ENCODE measurements at regions of chr19 and their contacts with region 1.

Region 1: DNA sequence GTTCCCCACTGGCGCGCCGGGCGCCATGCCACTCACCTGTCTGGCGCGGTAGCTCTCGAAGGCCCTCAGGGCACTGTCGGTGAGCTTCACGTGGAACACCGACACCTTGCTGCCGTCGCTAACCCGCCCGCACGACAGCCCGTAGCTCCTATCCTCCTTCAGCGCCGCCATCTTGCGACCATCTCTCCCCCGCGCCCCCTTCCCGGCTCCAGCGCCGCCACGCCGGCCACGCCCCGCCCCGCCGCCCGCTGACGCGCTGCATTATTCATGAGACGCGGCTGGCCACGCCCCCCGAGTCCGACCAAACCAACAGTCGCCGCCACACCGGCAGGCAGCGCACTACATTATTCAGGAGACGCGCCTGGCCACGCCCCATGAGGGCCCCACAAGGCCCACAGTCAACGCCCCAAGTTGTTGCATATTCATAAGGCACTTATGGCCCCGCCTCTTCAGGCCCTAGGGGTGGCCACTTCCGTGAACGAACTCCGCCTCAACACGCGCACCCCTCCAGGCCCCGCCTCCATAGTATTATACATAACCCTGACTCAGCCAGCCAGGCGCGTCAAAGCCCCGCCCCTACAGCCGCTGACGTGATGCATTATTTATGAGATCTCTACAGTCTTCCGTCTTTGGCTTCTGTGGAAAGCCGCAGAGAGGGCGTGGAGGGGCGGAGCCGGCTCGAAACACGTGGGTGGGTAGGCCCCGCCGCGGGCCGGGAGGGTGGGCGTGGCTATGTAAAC is at the start of gene ELL:
- DNase-seq: peak; percentile 99
- ATAC-seq: peak; percentile 77
- H3K4me3 ChIP-seq: peak within 1 kb of the TSS; percentile 95 to 100 (median 96)
- H3K27ac ChIP-seq: peak within 1 kb of the TSS; percentile 94
- H3K4me1 ChIP-seq: peaks cover 53% of the 10 kb centered on the region
- H3K27me3 ChIP-seq: no peaks in the 10 kb centered on the region; a peak in 1 of 5 replicates
- CTCF ChIP-seq: 0 out of 2 replicates have a peak, but pooled peaks have one; percentile 18
- EP300 ChIP-seq: 0 out of 4 replicates have a peak, but pooled peaks of 1 of the 2 experiments have one; percentile 9
- POLR2A ChIP-seq: peak; percentile 90 to 93
- RAD21 ChIP-seq: peak; percentile 35
- total RNA-seq, gene ELL: 3.2 and 3.7 TPM in 2 replicates

Region 2: DNA sequence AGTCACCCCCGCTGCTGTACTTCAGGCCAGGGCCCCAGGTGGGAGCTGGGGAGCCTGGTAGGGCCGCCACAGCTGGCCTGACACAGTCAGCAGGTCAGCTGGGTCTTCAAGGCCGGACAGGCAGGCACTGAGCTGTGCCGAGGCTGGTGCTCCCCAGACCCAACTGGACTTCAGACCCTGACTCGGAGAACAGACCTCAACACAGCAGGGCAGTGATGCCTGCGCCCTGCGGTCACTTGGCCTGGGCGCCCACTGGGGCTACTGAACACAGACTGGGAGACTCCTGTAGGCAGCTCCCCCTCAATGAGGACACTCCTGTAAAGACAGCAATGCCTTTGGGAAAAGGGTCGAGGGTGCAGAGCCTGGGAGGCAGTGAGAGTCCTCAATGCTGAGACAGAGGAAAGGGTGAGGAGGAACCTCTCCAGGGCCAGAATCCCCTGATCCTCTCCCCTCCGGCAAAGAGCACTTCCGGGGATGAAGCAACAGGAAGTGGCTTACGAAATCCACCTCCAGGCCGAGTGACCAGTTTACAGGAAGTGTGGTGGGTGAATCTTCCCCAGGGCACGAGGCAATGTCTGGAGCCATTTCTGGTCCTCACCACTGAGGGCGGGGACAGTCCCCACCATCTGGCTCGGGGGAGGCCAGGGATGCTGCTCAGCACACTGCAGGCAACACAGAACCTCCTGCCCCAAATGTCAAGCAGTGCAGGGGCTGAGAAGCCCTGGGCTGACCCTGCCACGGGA is 43.3 kb before region 1 on chr19:
- CTCF ChIA-PET with region 1: no interaction called
- POLR2A ChIA-PET with region 1: interaction called, 5 read pairs
- in situ Hi-C with region 1: loop called (anchors 10 kb)
- intact Hi-C with region 1: no loop called
- DNase-seq: peak; percentile 88
- ATAC-seq: peak; percentile 73
- H3K4me3 ChIP-seq: peak overlapping the region in 2 of 3 experiments; percentile 9 to 45; a peak in 3 of 6 replicates
- H3K27ac ChIP-seq: peak overlapping the region; percentile 90
- H3K4me1 ChIP-seq: peaks cover 79% of the 10 kb centered on the region
- H3K27me3 ChIP-seq: no peaks in the 10 kb centered on the region
- CTCF ChIP-seq: 0 out of 2 replicates have a peak, but pooled peaks have one; percentile 21
- EP300 ChIP-seq: peak in 1 of 2 experiments; percentile 75; a peak in 2 of 4 replicates
- POLR2A ChIP-seq: peak in 1 of 2 experiments; percentile 31; a peak in 2 of 4 replicates
- RAD21 ChIP-seq: peak; percentile 8; the same call in 1 of the 2 replicates

Region 3: DNA sequence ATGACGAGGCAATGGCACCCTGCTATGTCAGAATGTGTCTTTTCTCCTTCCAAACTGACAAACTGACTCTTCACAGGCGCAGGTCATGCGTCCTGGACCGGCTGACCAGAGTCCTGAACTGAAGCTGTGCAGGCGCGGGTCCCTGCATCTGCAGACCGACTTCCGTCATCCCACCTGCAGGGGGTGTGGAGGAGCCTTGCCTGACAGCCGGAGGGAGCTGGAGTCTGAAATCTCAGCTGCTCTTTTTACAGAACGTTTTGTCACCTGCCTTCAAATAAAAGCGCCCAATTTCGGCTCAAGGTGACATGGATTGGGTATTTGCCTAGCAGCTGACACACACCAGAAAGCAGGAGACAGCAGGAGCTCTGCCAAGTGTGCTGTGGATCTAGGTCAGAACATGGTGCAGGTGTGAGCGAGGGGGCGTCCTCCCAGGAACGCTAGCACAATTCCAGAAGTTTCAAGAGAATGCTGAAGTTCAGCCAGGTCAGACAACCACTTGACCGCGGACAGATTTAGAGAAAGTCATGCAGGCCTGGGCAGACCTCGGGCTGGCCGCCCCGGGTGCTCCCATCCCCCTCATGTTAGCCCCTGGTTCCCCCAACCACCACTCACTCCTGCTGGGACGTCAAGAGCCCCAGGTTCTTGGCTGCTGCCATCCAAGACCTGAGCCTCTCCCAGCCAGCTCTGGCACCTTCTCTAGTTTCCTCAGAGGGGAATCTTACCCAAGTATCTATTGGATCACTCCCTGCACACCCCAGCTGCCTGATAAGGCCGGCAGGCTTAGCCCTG is 33.0 kb before region 1 on chr19:
- CTCF ChIA-PET with region 1: interaction called, 3 read pairs
- POLR2A ChIA-PET with region 1: interaction called, 16 read pairs
- in situ Hi-C with region 1: no loop called
- intact Hi-C with region 1: loop called (anchors 5 kb)
- DNase-seq: peak; percentile 50
- ATAC-seq: peak; percentile 82
- H3K4me3 ChIP-seq: no peak overlapping the region
- H3K27ac ChIP-seq: no peak overlapping the region
- H3K4me1 ChIP-seq: peaks cover 61% of the 10 kb centered on the region
- H3K27me3 ChIP-seq: no peaks in the 10 kb centered on the region
- CTCF ChIP-seq: peak; percentile 74
- EP300 ChIP-seq: no peak
- POLR2A ChIP-seq: no peak
- RAD21 ChIP-seq: peak; percentile 83

Region 4: DNA sequence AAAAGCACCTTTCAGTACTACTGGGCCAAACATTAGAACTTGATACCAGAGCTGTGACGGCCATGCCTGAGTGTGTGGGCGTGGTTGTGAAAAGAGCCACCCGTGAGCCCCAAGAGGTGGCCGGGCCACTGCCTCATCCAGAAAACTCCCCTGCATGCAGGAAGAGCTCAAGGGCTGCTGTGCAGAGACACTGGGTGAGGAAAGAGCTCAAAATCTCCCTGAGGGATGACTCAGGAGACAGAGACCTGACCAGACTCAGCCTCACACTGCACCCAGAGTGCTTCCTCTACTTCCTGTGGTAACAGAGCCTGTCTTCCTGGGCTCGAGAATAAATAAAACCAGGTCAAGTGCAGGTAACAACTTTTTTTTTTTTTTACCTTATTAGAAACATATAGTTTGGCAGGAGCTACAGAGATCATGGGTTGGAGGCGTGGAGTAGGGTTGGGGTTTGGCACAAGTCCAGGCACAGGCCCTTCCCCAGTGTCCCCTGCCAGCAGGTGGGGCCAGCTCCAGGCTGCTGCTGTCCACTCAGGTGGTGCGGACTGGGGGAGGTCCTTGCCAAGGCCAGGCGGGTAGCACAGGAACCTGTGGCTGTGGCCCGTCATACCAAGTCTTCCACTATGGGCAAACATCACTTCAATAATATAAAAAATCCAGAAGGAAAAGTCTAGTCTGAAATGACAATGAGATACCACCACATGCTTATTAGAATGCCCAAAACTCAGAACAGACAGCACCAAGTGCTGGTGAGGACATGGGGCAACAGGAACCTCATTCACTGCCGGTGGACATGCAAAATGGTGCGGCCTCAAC is 25.7 kb before region 1 on chr19:
- CTCF ChIA-PET with region 1: no interaction called
- POLR2A ChIA-PET with region 1: interaction called, 4 read pairs
- in situ Hi-C with region 1: no loop called
- intact Hi-C with region 1: loop called (anchors 2 kb)
- DNase-seq: peak; percentile 32
- ATAC-seq: peak; percentile 56
- H3K4me3 ChIP-seq: no peak overlapping the region
- H3K27ac ChIP-seq: no peak overlapping the region
- H3K4me1 ChIP-seq: peaks cover 57% of the 10 kb centered on the region
- H3K27me3 ChIP-seq: no peaks in the 10 kb centered on the region
- CTCF ChIP-seq: peak; percentile 76
- EP300 ChIP-seq: no peak
- POLR2A ChIP-seq: no peak
- RAD21 ChIP-seq: peak; percentile 37; the same call in 1 of the 2 replicates

Region 5: DNA sequence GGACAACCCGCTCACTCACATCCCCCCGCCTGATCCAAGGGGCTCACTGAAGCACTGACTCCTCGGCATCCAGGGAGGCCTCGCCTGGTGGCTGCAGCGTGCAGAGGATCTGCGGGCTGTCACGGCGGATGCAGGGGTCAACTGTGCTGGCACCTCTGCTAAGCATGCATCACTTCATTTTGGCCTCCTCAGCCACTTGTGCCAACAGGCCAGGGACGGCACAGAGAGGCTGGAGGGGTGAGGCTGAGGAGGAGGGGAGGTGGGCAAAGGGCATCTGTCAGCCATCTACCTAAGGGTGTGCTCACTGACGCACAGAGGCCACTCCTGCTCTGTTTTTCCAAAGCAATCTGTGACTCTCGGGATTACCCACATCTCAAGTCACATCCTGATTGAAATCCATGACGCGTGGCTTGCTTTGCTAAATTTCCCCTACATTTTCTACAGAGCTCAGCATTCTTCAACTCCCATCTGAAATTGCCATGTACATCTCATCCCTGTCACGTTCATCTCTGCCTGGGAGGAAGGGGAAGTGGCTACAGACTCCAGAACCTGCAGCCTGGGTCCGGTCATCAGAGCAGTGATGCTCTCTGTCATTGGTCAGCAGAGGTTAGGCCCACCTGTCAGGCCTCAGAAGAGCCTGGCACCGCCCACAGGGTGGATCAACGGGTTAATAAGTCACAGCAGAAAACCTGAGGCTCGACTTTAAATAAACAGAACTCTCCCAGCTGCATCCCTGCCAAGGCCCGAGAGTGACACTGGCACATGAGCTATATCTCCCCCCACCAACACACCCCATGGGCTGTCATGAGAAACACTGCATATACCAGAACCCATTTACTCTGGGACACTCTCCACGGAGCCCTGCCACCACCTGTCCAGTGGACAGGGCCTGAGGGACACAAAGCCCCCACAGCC is 17.8 kb before region 1 on chr19:
- CTCF ChIA-PET with region 1: interaction called, 3 read pairs
- POLR2A ChIA-PET with region 1: interaction called, 16 read pairs
- in situ Hi-C with region 1: no loop called
- intact Hi-C with region 1: no loop called
- DNase-seq: peak; percentile 96
- ATAC-seq: peak; percentile 94
- H3K4me3 ChIP-seq: peak overlapping the region; percentile 1 to 56 (median 14); a peak in 4 of 6 replicates
- H3K27ac ChIP-seq: peak overlapping the region; percentile 56
- H3K4me1 ChIP-seq: peaks cover 67% of the 10 kb centered on the region
- H3K27me3 ChIP-seq: no peaks in the 10 kb centered on the region
- CTCF ChIP-seq: no peak
- EP300 ChIP-seq: peak in 1 of 2 experiments; percentile 9; a peak in 1 of 4 replicates
- POLR2A ChIP-seq: peak in 1 of 2 experiments; percentile 74; a peak in 2 of 4 replicates
- RAD21 ChIP-seq: no peak

Region 6: DNA sequence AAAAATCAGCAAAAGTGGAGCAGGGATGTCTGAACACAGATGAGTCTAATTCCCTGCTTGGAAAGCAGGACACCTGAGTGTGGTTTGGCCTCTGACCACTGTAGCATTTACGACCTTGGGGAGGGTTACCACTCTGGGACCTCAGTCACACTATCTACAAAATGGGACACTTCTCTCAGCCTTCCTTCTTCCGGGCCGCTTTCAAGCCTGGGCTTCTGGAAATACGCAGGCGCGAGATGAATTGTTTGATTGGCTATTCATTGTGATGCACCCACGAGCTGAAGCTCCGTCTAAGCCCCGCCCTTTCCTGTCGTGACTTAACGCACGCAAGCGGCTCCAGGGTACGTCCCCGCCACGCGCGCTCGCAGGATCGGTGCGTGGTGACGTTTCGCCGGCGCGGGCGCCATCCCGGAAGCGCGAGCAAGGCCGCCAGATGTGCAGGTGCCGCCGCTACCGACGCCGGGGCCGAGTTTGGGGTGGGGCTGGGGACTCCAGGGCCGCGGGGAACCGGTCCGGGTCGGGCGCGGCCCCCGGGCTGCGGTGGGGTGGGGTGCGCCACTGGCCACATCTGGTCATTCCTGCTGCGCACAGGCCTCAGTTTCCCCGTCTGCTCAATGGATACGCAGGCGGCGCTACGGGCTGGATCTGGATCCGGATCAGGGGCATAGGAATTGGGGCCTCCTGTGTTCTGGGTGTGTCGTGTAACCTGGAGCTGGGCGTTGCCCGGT is 35.6 kb after region 1 on chr19 and contains the start of gene KXD1:
- CTCF ChIA-PET with region 1: no interaction called
- POLR2A ChIA-PET with region 1: interaction called, 20 read pairs
- in situ Hi-C with region 1: no loop called
- intact Hi-C with region 1: loop called (anchors 2 kb)
- DNase-seq: peak; percentile 95
- ATAC-seq: peak; percentile 95
- H3K4me3 ChIP-seq: peak within 1 kb of the TSS; percentile 69 to 90 (median 86)
- H3K27ac ChIP-seq: peak within 1 kb of the TSS; percentile 50
- H3K4me1 ChIP-seq: peaks cover 44% of the 10 kb centered on the region
- H3K27me3 ChIP-seq: no peaks in the 10 kb centered on the region; a peak in 1 of 5 replicates
- CTCF ChIP-seq: 0 out of 2 replicates have a peak, but pooled peaks have one; percentile 6
- EP300 ChIP-seq: 0 out of 4 replicates have a peak, but pooled peaks of 1 of the 2 experiments have one; percentile 31
- POLR2A ChIP-seq: peak in 1 of 2 experiments; percentile 62; a peak in 2 of 4 replicates
- RAD21 ChIP-seq: no peak
- total RNA-seq, gene KXD1: 44.6 and 53.1 TPM in 2 replicates

Region 7: DNA sequence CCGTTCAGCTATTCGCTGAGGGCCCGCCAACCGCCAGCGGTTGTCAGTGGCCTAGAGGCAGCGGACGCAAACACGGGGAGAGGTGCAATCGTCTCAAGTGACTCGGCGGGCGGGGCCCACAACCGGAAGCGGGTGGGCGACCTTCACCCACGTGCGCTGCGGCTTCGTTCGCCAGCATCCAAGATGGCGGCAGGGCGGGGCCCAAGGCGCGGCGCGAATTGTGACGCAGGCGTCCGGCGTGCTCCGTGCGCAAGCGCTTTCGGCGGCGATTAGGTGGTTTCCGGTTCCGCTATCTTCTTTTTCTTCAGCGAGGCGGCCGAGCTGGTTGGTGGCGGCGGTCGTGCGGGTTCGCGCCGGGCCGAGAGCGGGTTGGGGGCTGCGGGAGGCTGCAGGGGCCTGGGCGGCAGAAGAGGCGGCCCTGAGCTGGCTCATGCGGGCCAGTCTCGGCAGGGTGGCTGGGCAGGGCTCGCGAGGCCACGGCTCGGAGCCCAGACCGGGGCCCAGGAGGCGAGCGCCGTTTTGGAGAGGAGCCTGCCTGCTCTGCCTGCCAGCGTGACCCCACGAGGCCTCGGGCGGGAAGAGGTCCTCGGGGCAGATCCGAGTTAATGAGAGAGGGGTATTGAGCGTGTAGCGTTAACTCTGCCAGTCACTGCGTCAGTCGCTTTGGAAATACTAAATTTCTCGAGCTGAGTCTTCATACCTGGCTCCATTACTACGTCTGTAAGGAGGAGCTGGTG is 49.7 kb after region 1 on chr19 and contains the start of gene UBA52:
- CTCF ChIA-PET with region 1: no interaction called
- POLR2A ChIA-PET with region 1: interaction called, 11 read pairs
- in situ Hi-C with region 1: no loop called
- intact Hi-C with region 1: no loop called
- DNase-seq: peak; percentile 93
- ATAC-seq: peak; percentile 95
- H3K4me3 ChIP-seq: peak within 1 kb of the TSS; percentile 75 to 90 (median 85)
- H3K27ac ChIP-seq: peak within 1 kb of the TSS; percentile 75
- H3K4me1 ChIP-seq: peaks cover 20% of the 10 kb centered on the region
- H3K27me3 ChIP-seq: no peaks in the 10 kb centered on the region; a peak in 1 of 5 replicates
- CTCF ChIP-seq: peak; percentile 48
- EP300 ChIP-seq: peak in 1 of 2 experiments; percentile 41; a peak in 1 of 4 replicates
- POLR2A ChIP-seq: peak; percentile 68 to 88; a peak in 3 of 4 replicates
- RAD21 ChIP-seq: peak; percentile 47
- total RNA-seq, gene UBA52: 959 and 1,184 TPM in 2 replicates

Measured in HepG2 (cell line).